ENCODE measurements at regions of chr11 and their contacts with region 1.

Region 1: DNA sequence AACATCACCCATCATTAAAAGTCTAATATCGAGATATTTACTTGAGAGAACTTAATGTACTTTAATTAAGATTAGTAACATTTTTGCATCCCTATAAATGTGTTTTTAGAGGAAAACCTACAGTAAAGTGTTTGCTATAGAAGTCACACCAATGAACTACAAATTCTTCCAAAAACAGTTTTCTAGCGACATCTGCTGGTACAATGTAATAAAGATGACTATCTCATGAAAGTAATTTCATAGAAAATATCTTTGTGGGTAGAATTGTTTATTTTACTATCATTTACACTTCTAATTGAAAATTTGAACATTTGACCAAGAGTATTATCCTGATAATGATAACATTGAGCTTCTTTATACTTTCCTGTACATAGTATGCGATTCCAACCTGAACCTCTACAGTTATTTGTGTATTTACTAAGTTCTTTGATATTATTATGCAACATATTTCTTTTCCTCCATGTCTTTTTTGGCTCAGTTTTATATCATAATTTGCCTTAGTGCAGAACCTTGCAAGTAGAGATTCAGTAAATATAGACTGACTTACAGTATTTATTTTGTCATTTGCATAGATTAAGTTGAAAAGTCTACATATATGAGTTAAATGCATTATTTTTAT is 252.7 kb downstream of the TMEM135 start:
- DNase-seq: peak; percentile 42 to 59
- ATAC-seq: peak; percentile 66 to 73; a peak in 5 of 6 replicates
- H3K4me3 ChIP-seq: no peak overlapping the region
- H3K27ac ChIP-seq: no peak overlapping the region
- H3K4me1 ChIP-seq: no peaks in the 10 kb centered on the region
- CTCF ChIP-seq: peak; percentile 86
- EP300 ChIP-seq: no peak
- POLR2A ChIP-seq: no peak
- RAD21 ChIP-seq: peak; percentile 85 to 91

Region 2: DNA sequence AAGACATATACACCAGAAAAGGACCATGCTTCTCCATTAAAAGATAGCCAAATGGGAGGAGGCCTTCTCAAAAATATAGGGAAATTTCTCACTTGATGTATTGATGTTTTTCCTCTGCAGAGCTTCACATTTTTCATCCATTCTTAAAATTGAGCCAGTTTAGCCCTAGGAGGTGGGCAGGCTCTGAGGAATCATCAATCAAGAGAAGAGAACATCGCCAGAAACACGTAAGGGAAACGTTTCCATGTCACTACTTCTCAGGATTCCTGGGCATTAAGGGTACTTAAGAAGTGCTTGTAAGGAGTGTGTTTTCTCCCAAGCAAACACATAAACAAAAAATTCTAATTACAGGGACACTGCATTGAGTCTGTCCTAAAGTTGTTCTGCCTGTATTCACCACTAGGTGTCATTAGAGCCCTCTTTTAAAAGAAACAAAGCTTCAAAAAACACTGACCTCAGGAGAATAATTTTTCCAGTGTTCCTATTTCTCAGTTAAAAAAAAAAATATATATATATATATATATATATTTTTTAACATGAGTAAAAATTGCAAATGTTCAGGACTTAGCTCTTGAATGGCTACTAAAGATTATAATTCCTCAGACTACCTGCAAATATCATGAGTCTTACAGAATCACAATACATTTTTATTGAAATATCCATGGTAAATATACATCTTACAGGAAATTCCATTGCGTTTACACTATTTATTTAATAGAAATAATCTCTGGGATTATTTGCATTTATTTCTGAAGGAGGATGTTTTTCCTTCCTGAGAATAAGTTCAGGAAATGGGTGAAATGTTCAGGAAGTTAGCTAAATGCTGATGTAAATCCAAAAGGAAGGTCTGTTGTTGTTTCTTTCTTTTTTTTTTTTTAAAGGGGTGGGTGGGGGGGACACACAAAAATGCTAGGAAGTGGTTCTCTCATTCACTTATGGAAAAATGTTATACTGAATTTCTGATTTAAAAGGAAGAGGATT is 351.2 kb before region 1 on chr11:
- CTCF ChIA-PET with region 1: interaction called, 50 read pairs
- POLR2A ChIA-PET with region 1: no interaction called
- DNase-seq: peak; percentile 46 to 50
- ATAC-seq: peak; percentile 67 to 84; a peak in 5 of 6 replicates
- H3K4me3 ChIP-seq: no peak overlapping the region
- H3K27ac ChIP-seq: no peak overlapping the region
- H3K4me1 ChIP-seq: no peaks in the 10 kb centered on the region
- CTCF ChIP-seq: peak; percentile 81
- EP300 ChIP-seq: no peak
- POLR2A ChIP-seq: no peak
- RAD21 ChIP-seq: peak; percentile 72 to 77

Region 3: DNA sequence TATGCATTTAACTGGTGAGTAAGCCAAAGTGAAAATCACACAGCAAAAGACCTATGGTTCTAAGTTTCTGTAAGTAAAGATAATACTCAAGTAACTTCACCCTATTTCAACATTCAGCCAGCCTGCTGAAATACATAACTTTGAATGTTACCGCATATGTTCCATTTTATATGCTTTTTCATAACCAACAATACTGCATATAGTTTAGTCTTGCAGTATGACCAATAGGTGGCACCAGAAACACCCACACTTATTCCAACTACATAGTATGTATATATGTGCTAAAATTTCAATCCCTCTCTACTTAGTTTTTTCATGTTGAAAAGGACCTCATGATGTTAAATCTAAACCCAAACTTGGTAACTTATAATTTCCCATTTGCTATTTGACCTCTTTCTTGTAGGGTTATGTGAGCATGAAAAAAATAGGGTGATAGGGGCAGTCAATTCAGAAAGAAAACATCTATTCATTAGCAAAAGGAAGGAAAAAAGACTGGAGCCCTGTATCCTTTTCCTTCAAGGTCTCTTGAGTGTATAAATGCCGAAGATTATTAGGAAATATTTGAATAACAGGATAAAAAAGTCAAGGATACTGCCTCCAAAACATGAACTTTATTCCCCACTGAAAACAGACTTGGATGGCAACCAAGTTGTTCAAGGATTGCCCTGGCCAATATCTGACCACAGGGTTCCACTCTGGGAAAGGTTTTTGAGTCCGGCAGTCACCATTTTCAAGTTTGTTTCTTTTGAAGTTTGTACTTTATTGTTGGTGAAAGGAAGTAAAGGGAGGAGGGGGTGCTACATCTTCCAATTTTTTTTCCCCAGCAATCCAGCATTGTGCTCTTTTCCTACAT is 311.4 kb before region 1 on chr11:
- CTCF ChIA-PET with region 1: interaction called, 12 read pairs
- POLR2A ChIA-PET with region 1: no interaction called
- DNase-seq: peak; percentile 38 to 56
- ATAC-seq: peak; percentile 88 to 95; a peak in 5 of 6 replicates
- H3K4me3 ChIP-seq: no peak overlapping the region
- H3K27ac ChIP-seq: no peak overlapping the region
- H3K4me1 ChIP-seq: no peaks in the 10 kb centered on the region; the same call in 2 of the 3 replicates
- CTCF ChIP-seq: peak; percentile 69
- EP300 ChIP-seq: no peak
- POLR2A ChIP-seq: no peak
- RAD21 ChIP-seq: peak; percentile 57 to 67; a peak in 4 of 5 replicates

Region 4: GRCh38 chr11:86999859-87000753 is 290.3 kb before region 1 on chr11:
- CTCF ChIA-PET with region 1: interaction called, 13 read pairs
- POLR2A ChIA-PET with region 1: no interaction called
- DNase-seq: peak in 1 of 2 experiments; percentile 56
- ATAC-seq: peak; percentile 35 to 80; a peak in 5 of 6 replicates
- H3K4me3 ChIP-seq: no peak overlapping the region
- H3K27ac ChIP-seq: peak overlapping the region in 1 of 2 experiments; percentile 34; a peak in 1 of 6 replicates
- H3K4me1 ChIP-seq: peaks cover 6% of the 10 kb centered on the region; the same call in 1 of the 3 replicates
- CTCF ChIP-seq: no peak
- EP300 ChIP-seq: no peak
- POLR2A ChIP-seq: no peak
- RAD21 ChIP-seq: no peak

Region 5: GRCh38 chr11:87180742-87181141 is 109.7 kb before region 1 on chr11:
- CTCF ChIA-PET with region 1: no interaction called
- POLR2A ChIA-PET with region 1: no interaction called
- DNase-seq: no peak
- ATAC-seq: no peak
- H3K4me3 ChIP-seq: no peak overlapping the region
- H3K27ac ChIP-seq: no peak overlapping the region
- H3K4me1 ChIP-seq: 0 out of 3 replicates have a peak, but pooled peaks cover 5% of the 10 kb centered on the region
- CTCF ChIP-seq: no peak
- EP300 ChIP-seq: no peak
- POLR2A ChIP-seq: no peak
- RAD21 ChIP-seq: no peak

Region 6: GRCh38 chr11:87275176-87275575 is 15.2 kb before region 1 on chr11:
- CTCF ChIA-PET with region 1: no interaction called
- POLR2A ChIA-PET with region 1: no interaction called
- DNase-seq: no peak
- ATAC-seq: no peak
- H3K4me3 ChIP-seq: no peak overlapping the region
- H3K27ac ChIP-seq: no peak overlapping the region
- H3K4me1 ChIP-seq: no peaks in the 10 kb centered on the region
- CTCF ChIP-seq: no peak
- EP300 ChIP-seq: no peak
- POLR2A ChIP-seq: no peak
- RAD21 ChIP-seq: no peak

Region 7: DNA sequence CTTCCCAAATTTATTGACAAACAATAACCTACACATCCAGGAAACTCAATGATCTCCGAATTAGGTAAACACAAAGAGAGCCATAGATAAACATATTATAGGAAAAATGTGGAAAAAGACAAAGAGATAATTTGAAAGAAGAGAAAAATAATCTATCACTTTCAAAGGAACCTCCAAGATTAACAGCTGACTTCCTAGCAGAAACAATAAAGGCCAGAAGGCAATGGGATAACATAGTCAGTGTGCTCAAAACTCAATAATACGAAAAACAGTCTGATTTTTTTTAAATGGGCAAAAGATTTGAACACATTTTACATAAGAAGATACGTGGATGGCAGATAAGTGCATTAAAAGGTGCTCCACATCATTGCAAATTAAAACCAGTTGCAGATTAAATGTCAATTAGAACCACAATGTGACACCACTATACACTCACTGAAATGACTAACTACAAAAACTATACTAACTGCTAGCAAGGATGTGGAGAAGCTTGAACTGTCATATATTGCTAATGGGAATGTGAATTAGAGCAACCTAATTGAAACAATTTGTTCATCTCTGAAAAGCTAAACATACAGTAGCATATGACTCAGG is 47.7 kb after region 1 on chr11:
- CTCF ChIA-PET with region 1: no interaction called
- POLR2A ChIA-PET with region 1: no interaction called
- DNase-seq: no peak
- ATAC-seq: no peak
- H3K4me3 ChIP-seq: no peak overlapping the region
- H3K27ac ChIP-seq: no peak overlapping the region
- H3K4me1 ChIP-seq: no peaks in the 10 kb centered on the region
- CTCF ChIP-seq: no peak
- EP300 ChIP-seq: no peak
- POLR2A ChIP-seq: no peak
- RAD21 ChIP-seq: no peak

Region 8: DNA sequence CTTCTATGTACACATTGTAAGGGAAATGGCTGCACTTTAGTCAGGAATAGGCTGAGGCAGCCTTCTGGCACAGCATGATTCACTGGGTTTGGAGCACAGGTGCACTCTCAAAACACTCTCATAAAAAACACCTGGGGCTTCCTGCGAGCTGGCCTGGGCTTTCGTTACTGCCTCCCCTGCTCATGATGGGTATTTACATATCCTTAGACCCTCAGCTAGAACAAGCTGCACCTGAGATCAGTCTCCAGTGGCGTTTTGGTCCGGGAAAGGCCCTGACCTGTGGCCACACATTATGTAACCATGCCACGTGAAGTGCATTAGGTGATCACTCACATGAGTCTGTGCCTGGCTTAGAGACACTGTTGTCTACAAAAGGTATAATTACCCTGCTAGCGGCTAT is 69.0 kb after region 1 on chr11:
- CTCF ChIA-PET with region 1: no interaction called
- POLR2A ChIA-PET with region 1: no interaction called
- DNase-seq: no peak
- ATAC-seq: no peak
- H3K4me3 ChIP-seq: no peak overlapping the region
- H3K27ac ChIP-seq: no peak overlapping the region
- H3K4me1 ChIP-seq: no peaks in the 10 kb centered on the region
- CTCF ChIP-seq: no peak
- EP300 ChIP-seq: no peak
- POLR2A ChIP-seq: no peak
- RAD21 ChIP-seq: no peak